Mammary epithelial cell (primary cell): ENCODE measurements at regions of chr4 and their contacts with region 1.

Region 1: DNA sequence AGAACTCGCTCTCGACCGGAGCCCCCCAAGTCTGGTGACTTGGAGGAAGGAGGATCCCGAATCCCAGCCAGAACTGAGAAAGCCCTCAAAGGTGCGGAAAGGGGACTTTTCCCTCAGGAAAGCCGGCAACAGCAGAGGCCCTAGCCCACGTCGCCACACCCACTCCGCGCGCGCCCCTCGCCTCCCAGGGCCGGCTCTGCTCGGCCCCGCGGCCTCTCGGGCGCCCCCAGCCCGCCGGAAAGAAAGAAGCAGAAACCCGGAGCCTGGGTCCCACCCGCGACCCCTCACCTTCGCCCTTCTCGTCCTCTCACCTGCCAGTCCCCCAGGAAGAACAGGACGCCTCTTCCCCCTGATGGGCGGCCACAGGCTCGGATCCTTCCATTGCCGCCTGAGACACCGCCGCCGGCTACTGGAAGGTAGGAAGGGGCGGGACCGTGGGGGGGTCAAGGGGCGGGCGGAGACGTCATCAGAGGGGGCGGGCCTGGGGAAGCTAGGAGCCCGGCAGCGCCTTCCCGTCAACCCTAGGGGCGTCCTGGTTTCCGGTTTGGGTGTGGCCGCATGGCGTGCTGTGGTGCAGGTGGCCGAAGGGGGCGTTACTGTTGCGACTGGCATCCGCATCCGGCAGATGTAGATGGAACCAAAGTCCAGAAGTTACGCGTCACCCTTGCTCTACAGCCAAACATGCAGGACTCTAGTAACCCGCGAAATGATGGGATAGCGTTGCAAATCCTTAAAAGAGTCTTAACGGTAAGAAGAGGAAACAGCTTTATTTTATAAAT is at the start of gene UBA6:
- DNase-seq: peak; percentile 96
- H3K4me3 ChIP-seq: peak within 1 kb of the TSS; percentile 68 to 88 (median 86)
- H3K27ac ChIP-seq: peak within 1 kb of the TSS; percentile 96
- H3K4me1 ChIP-seq: peaks cover 18% of the 10 kb centered on the region
- H3K27me3 ChIP-seq: no peaks in the 10 kb centered on the region
- CTCF ChIP-seq: peak in 1 of 2 donors; percentile 50
- total RNA-seq, gene UBA6: 178 to 203 TPM

Region 2: DNA sequence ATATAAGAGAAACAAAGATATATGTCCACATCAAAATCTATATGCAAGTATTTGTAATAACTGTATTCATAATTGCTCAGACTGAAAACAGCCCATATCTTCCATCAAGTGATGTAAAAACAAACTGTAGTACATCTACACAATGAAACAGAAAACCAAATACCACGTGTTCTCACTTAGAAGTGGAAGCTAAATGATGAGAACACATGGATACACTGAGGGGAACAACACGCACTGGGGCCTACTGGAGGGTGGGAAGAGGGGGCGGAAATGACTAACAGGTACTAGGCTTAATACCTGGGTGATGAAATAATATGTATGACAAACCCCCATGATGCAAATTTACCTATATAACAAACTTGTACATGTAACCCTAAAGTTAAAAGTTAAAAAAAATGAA is 42.6 kb before region 1 on chr4:
- CTCF ChIA-PET with region 1: no interaction called
- dilution Hi-C with region 1: no loop called
- in situ Hi-C with region 1: no loop called
- intact Hi-C with region 1: no loop called
- DNase-seq: peak; percentile 14
- H3K4me3 ChIP-seq: no peak overlapping the region
- H3K27ac ChIP-seq: no peak overlapping the region
- H3K4me1 ChIP-seq: no peaks in the 10 kb centered on the region
- H3K27me3 ChIP-seq: no peaks in the 10 kb centered on the region
- CTCF ChIP-seq: no peak

Region 3: DNA sequence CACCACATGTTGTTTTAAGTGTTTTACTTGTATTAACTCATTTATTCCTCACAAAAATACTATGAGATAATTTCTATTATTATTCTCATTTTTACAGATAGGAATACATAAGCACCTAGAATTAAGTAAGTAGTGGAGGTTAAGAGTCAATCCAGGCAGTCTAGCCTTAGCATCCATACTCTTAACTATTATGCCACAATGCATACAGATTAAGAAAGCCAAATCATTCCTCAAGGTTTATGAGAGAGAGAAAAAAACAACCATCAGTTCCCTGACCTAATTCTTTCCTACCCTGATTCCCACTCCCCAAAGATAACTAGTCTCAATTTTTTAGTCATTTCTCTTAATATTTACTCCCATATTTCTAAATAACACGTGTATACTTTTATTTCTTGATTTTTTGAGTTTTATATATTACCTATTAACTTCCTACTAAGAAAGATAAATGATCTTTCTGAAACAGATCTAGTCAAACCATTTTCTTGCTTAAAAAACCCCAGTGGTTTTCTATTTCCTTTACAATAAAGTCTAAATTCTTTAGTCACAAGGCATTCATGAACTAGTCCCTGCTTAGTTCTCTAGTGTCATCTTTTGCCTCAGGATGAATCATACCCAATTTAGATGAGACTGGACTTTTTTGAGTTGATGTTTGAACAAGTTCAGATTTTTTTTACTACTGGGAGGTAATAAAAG is 15.9 kb before region 1 on chr4:
- CTCF ChIA-PET with region 1: no interaction called
- dilution Hi-C with region 1: no loop called
- in situ Hi-C with region 1: no loop called
- intact Hi-C with region 1: no loop called
- DNase-seq: peak; percentile 79
- H3K4me3 ChIP-seq: no peak overlapping the region
- H3K27ac ChIP-seq: peak overlapping the region; percentile 51
- H3K4me1 ChIP-seq: peaks cover 27% of the 10 kb centered on the region
- H3K27me3 ChIP-seq: no peaks in the 10 kb centered on the region
- CTCF ChIP-seq: no peak

Region 4: GRCh38 chr4:67727124-67727850 is 26.4 kb after region 1 on chr4:
- CTCF ChIA-PET with region 1: no interaction called
- dilution Hi-C with region 1: no loop called
- in situ Hi-C with region 1: no loop called
- intact Hi-C with region 1: loop called (anchors 1 kb)
- DNase-seq: peak; percentile 92
- H3K4me3 ChIP-seq: no peak overlapping the region
- H3K27ac ChIP-seq: peak overlapping the region; percentile 92
- H3K4me1 ChIP-seq: peaks cover 52% of the 10 kb centered on the region
- H3K27me3 ChIP-seq: no peaks in the 10 kb centered on the region
- CTCF ChIP-seq: no peak